Heart right ventricle (tissue), 16 donors: ENCODE measurements at regions of chr4 and their contacts with region 1.

Region 1: GRCh38 chr4:149801416-149801815 is 14.2 kb downstream of the IQCM start:
- DNase-seq: no peak
- ATAC-seq: no peak
- H3K4me3 ChIP-seq: no peak overlapping the region
- H3K27ac ChIP-seq: no peak overlapping the region
- H3K4me1 ChIP-seq: no peaks in the 10 kb centered on the region
- H3K27me3 ChIP-seq: no peaks in the 10 kb centered on the region
- CTCF ChIP-seq: no peak

Region 2: DNA sequence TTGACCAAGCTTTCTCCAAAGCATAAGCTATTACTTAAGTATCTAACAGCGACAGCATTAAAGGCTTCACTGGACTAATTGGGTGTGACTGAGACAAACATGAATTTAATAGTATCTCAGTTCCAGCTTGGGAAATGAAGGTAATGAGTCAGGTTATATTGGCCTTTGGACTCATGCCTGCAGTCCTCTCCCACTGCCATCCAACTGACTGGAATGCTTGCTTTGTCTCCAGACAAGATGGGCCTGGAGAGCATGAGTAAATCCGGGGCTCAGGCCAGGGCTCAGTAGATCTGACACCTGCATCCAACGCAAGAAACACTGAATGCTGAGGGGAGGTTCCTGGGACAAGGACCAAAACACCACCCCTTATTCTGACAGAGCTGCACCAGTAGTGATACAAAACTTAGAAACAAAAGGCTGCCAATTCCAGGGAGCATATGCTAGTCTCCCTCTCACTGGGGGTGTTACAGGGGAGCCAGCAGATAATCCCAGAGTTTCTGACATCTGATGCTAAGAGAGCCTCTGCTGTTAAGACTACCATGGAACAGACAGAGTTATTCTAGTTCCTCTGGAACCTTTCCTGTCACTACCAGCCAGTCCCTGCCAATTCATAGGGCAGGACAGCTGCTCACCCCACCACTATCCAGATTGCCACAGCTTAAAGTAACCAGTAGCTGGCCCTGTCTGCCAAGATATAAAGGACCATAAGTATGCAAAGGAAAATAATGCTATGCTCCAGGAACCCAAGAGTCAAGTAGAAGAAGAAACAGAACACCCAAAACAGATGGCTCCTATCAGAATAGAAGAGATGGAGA is 279.6 kb before region 1 on chr4:
- intact Hi-C with region 1: loop called in 1 of 10 experiments (anchors 2 kb)
- DNase-seq: peak in 1 of 2 donors; percentile 4
- ATAC-seq: peak in 5 of 8 donors; percentile 59 to 89 (median 79)
- H3K4me3 ChIP-seq: no peak overlapping the region
- H3K27ac ChIP-seq: no peak overlapping the region
- H3K4me1 ChIP-seq: no peaks in the 10 kb centered on the region
- H3K27me3 ChIP-seq: no peaks in the 10 kb centered on the region
- CTCF ChIP-seq: no peak

Region 3: GRCh38 chr4:149549911-149550310 is 251.5 kb before region 1 on chr4:
- intact Hi-C with region 1: no loop called
- DNase-seq: peak in 1 of 2 donors; percentile 6
- ATAC-seq: peak in 5 of 8 donors; percentile 58 to 71 (median 62)
- H3K4me3 ChIP-seq: no peak overlapping the region
- H3K27ac ChIP-seq: no peak overlapping the region
- H3K4me1 ChIP-seq: no peaks in the 10 kb centered on the region
- H3K27me3 ChIP-seq: no peaks in the 10 kb centered on the region
- CTCF ChIP-seq: peak in 7 of 9 donors; percentile 6 to 62 (median 47)

Region 4: GRCh38 chr4:149765630-149766029 is 35.8 kb before region 1 on chr4:
- intact Hi-C with region 1: no loop called
- DNase-seq: no peak
- ATAC-seq: no peak
- H3K4me3 ChIP-seq: no peak overlapping the region
- H3K27ac ChIP-seq: no peak overlapping the region
- H3K4me1 ChIP-seq: no peaks in the 10 kb centered on the region
- H3K27me3 ChIP-seq: no peaks in the 10 kb centered on the region
- CTCF ChIP-seq: no peak

Region 5: DNA sequence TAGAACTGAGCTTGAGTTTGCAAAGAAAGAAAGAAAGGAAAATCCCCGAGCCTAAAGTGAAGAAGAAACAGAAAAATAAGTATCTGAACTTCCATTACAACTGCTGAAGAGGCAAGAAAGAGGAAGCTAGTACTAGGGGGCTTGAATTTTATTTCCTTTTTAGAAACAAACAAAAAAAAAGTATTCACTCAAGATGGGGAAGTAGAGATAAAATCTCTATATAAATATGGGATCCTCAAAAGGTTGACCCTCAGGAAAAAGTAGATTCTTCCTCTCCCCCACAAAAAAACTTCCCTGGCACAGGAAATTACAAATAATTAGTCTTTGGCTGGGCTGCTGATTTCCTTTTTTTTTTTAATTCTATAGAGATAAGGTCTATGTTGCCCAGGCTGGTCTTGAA is 1197.7 kb after region 1 on chr4:
- intact Hi-C with region 1: no loop called
- DNase-seq: no peak
- ATAC-seq: no peak
- H3K4me3 ChIP-seq: no peak overlapping the region
- H3K27ac ChIP-seq: no peak overlapping the region
- H3K4me1 ChIP-seq: peaks cover 0 to 8% (median 0%) of the 10 kb centered on the region in 9 donors
- H3K27me3 ChIP-seq: no peaks in the 10 kb centered on the region
- CTCF ChIP-seq: no peak